ENCODE measurements at regions of chr4 and their contacts with region 1.

Region 1: DNA sequence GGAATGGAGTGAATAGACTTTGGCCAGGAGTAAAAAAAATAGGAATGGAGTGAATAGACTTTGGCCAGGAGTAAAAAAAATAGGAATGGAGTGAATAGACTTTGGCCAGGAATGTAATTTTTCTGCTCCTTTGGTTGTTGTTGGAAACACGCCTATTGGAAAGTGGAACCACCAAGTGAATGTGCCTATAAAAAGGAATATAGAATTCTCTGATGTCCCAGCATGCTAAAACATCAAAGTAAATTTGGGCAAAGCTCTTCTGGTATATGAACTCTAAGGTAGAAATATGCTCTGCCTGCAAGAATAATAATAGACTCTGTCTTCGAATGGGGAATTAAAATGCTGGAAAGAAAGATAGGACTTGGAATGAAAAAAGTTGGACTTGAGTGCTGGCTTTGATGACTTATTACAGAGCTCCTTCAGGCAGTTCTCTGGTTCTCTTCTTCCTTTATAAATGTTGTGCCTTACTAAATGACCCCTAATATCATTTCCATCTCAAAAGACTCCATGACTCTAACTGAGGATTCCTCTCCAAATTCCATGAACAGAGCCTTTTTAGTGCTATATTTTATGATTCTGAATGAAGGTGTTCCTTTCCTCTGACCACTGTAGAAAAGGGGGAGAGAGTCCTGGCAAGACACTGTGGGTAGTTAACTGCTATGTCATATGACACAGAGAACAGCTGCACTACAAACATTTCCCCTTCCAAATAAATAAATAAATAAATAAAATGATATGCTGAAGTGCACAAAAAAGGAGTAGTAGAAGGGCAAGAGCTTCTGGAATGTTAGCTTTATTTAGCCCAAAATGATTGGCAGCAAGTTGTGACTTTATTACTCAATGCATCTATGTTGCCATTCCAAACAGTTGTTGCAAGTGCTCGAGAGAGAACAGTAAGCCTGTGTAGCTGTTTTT is 13.5 kb upstream of the GBA3 start:
- DNase-seq: no peak
- H3K4me3 ChIP-seq: no peak overlapping the region
- H3K27ac ChIP-seq: no peak overlapping the region
- H3K4me1 ChIP-seq: no peaks in the 10 kb centered on the region
- H3K27me3 ChIP-seq: no peaks in the 10 kb centered on the region
- CTCF ChIP-seq: no peak
- POLR2A ChIP-seq: no peak

Region 2: DNA sequence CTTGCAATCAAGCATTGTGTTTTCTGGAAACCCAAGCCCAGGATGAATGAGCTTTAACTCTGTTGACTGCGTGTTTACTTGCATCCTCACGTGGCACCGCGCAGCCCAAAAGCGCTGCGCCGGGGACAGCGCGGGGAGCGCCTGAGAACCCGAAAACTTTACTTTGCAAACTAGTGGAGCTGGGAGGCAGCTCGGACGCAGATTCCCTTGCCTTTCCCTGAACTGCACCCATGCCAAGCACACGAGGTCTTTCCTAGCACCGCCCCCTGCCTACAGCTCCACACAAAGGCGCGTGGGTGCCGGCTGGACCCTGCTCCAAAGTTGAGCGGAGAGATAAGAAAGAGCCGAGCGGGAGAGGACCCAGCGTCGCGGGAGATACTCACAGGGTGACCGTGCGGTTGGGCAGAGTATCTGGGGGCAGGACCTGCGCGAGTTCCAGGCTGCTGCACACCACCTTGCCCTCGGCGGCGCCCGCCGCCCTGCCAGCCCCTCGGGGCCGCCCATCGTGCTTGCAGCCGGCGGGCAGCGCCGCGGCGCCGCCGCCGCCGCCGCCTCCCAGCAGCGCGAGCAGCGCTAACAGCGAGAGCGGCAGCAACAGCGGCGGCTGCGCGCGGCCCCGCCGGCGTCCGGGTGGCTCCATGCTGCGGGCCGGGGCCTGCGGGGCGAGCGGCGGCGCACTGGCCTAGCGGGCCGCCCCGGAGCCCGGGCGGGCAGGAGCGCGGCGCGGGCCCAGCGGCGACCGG is 163.9 kb before region 1 on chr4:
- intact Hi-C with region 1: loop called (anchors 5 kb)
- DNase-seq: peak; percentile 73
- H3K4me3 ChIP-seq: peak overlapping the region; percentile 47 to 54
- H3K27ac ChIP-seq: peak overlapping the region; percentile 78 to 89
- H3K4me1 ChIP-seq: no peaks in the 10 kb centered on the region
- H3K27me3 ChIP-seq: no peaks in the 10 kb centered on the region
- CTCF ChIP-seq: peak in 2 of 4 experiments; percentile 28 to 34
- POLR2A ChIP-seq: peak; percentile 16

Region 3: GRCh38 chr4:22720091-22720490 is 40.9 kb after region 1 on chr4:
- intact Hi-C with region 1: no loop called
- DNase-seq: no peak
- H3K4me3 ChIP-seq: no peak overlapping the region
- H3K27ac ChIP-seq: no peak overlapping the region
- H3K4me1 ChIP-seq: no peaks in the 10 kb centered on the region
- H3K27me3 ChIP-seq: no peaks in the 10 kb centered on the region
- CTCF ChIP-seq: no peak
- POLR2A ChIP-seq: no peak